ENCODE measurements at regions of chr11 and their contacts with region 1.

Region 1: GRCh38 chr11:123301696-123302400 is 106.8 kb upstream of the CLMP start:
- DNase-seq: peak; percentile 80
- ATAC-seq: peak; percentile 80
- H3K4me3 Mint-ChIP-seq: peak overlapping the region; percentile 12
- H3K27ac Mint-ChIP-seq: peak overlapping the region; percentile 77
- H3K4me1 Mint-ChIP-seq: peaks cover 37% of the 10 kb centered on the region
- H3K27me3 Mint-ChIP-seq: peaks cover 18% of the 10 kb centered on the region
- CTCF ChIP-seq: peak; percentile 87

Region 2: DNA sequence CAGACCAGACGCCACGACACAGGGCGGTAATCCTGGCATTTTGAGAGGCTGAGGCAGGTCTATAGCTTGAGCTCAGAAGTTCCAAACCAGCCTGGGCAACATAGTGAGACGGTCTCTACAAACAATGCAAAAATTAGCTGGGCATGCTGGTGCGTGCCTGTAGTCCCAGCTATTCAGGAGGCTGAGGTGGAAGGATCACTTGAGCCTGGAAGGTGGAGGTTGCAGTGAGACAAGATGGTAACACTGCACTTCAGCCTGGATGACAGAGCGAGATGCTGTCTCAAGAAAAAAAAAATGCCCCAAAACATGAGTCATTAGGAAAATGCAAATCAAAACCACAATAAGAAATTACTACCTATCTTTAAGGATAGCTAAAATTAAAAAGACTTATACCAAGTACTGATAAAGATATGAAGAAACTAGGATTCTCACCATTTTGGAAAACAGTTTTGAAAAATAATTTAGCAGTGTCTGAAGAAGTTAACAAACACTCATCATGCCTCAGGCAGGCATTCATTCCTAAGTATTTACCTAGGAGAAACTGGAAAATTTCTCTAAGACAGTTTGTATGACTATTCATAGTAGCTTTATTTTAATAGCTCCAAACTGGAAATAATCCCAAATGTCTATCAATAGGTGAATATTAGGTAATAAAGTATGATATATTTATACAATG is 36.6 kb after region 1 on chr11:
- CTCF ChIA-PET with region 1: interaction called, 16 read pairs
- POLR2A ChIA-PET with region 1: no interaction called
- intact Hi-C with region 1: no loop called
- DNase-seq: no peak
- ATAC-seq: peak; percentile 69
- H3K4me3 Mint-ChIP-seq: no peak overlapping the region
- H3K27ac Mint-ChIP-seq: no peak overlapping the region
- H3K4me1 Mint-ChIP-seq: peaks cover 7% of the 10 kb centered on the region
- H3K27me3 Mint-ChIP-seq: peaks cover 17% of the 10 kb centered on the region
- CTCF ChIP-seq: no peak

Region 3: DNA sequence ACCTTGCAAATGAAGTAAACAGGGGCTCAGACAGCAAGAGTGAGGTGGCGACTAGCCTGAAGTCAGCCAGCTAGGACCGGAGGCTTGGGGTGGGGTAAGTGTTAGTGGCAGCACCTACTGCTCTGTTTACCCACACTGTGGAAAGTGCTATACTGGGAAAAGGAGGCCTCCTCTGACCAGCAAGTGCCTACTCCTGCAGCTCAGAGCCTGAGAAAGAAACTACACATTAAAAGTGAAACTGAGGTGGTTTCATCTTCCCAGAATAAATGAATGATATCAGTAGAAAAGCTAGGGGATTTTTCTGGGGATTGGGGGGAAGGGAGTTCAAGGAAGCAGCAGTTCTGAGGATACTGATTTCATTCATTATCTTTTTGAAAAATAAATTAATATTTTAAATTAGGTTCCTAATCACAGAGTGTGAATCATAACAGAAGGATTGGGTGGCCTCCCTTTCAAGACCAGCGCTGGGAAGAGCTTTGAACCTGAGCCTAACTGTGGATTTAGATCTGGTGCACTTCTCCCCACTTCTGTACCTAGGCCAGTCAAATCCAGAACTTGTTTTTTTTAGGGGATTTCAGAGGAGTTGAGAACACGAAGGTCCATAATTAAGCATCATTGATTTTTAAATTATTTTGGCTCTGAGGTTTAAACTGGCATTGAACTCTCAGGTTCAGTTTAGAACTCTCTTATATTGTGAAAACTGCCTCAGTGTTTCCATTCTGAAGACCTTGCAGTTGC is 80.1 kb after region 1 on chr11:
- CTCF ChIA-PET with region 1: interaction called, 12 read pairs
- POLR2A ChIA-PET with region 1: interaction called, 3 read pairs
- intact Hi-C with region 1: loop called (anchors 2 kb)
- DNase-seq: peak; percentile 83
- ATAC-seq: peak; percentile 91
- H3K4me3 Mint-ChIP-seq: peak overlapping the region; percentile 52
- H3K27ac Mint-ChIP-seq: no peak overlapping the region
- H3K4me1 Mint-ChIP-seq: peaks cover 16% of the 10 kb centered on the region
- H3K27me3 Mint-ChIP-seq: peaks cover 3% of the 10 kb centered on the region
- CTCF ChIP-seq: no peak

Region 4: GRCh38 chr11:123454060-123454651 is 152.3 kb after region 1 on chr11:
- CTCF ChIA-PET with region 1: interaction called, 3 read pairs
- POLR2A ChIA-PET with region 1: no interaction called
- intact Hi-C with region 1: loop called (anchors 5 kb)
- DNase-seq: peak; percentile 87
- ATAC-seq: peak; percentile 82
- H3K4me3 Mint-ChIP-seq: peak overlapping the region; percentile 43
- H3K27ac Mint-ChIP-seq: peak overlapping the region; percentile 88
- H3K4me1 Mint-ChIP-seq: peaks cover 57% of the 10 kb centered on the region
- H3K27me3 Mint-ChIP-seq: no peaks in the 10 kb centered on the region
- CTCF ChIP-seq: no peak

Region 5: GRCh38 chr11:123478352-123478987 is 176.6 kb after region 1 on chr11:
- CTCF ChIA-PET with region 1: interaction called, 54 read pairs
- POLR2A ChIA-PET with region 1: no interaction called
- intact Hi-C with region 1: loop called (anchors 1 kb)
- DNase-seq: peak; percentile 25
- ATAC-seq: peak; percentile 35
- H3K4me3 Mint-ChIP-seq: peak overlapping the region; percentile 7
- H3K27ac Mint-ChIP-seq: peak overlapping the region; percentile 14
- H3K4me1 Mint-ChIP-seq: peaks cover 42% of the 10 kb centered on the region
- H3K27me3 Mint-ChIP-seq: no peaks in the 10 kb centered on the region
- CTCF ChIP-seq: peak; percentile 86